Activated CD4-positive, alpha-beta memory T cell treated with anti-CD3 and anti-CD28 coated beads for 36 hours (primary cell): ENCODE measurements at regions of chr16 and their contacts with region 1.

Region 1: DNA sequence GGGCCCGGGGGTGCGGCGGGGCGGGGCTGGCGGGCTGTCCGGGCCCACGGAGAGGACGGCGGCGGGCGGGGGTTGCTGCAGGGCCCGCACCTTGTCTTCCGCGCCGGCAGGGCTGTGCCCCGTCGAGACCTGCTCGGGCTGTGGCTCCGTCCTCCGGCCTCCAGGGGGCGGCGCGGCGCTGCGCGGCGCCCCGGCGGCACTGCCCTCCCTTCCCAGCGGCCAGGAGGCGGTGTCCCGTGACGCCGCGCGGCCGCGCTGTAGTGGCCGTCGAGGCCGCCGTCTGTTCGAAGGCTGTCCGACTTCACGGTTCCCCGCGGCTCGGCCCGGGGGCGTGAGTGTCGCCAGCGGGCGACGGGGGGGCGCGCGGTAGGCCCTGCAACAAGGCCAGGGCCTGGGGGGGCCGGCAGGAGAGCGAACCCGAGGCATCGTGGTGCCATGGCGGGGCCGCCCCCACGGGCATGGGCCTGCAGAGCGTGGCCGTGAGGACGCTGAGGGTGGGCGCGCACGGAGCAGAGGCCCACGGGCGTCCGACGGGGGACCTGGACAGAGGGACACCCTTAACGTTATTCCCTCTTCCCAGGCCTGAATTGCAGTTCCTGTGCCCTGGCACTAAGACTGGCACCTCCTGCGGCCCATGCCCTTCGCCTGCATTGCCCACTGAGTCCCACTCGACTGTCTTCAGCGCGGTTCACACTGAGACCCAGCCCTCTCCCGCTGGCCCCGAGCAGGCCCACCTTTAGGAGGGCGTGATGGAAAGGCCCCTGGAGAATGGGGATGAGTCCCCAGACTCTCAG is at the start of gene PLEKHG4:
- DNase-seq: peak; percentile 90
- H3K4me3 Mint-ChIP-seq: peak within 1 kb of the TSS; percentile 86
- H3K27ac Mint-ChIP-seq: peak within 1 kb of the TSS; percentile 88
- H3K4me1 Mint-ChIP-seq: peaks cover 20% of the 10 kb centered on the region
- H3K27me3 Mint-ChIP-seq: no peaks in the 10 kb centered on the region
- total RNA-seq, gene PLEKHG4: 22.7 to 24.6 TPM

Region 2: DNA sequence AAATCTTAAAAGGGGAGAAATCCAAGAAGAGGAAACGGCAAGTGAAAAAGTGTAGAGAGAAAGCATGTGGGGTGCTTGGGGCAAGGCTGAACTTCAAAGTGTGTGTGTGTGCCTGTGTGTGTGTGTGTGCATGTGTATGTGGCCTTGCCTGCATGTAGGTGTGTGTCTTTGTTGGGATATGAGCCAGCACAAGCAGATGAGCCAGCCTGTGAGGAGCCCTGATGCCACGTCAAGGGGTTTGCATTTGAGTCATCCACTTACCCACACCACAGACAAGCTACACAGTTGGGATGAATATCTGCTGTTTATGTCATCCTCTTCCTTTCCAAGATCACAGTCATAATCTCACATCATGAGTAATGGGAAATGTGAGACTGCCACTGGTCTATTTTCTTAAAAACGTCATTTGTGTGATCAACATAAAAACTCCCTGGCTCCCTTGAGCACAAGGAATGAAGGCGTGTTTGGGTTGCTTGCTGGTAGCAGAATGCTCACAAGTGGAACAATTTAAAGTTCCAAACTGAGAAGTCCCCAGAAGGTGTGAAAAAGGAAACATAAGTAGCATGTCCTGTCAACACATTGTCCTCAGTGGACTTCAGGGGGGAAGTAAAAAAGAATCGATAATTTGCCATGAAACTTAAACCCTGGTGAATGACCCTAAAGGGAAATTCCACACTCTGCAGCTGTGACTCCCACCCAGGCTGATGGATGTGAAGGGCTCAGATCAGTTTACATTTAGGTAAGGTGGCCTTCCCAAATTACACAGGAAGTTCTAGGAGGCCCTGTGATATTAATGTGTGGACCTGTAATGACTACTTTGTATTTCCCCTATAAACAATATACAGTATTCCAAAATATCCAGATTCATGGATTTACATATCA is 32.4 kb after region 1 on chr16:
- CTCF ChIA-PET with region 1: interaction called, 6 read pairs
- POLR2A ChIA-PET with region 1: interaction called, 4 read pairs
- intact Hi-C with region 1: loop called (anchors 1 kb)
- DNase-seq: peak; percentile 95
- H3K4me3 Mint-ChIP-seq: peak overlapping the region; percentile 20
- H3K27ac Mint-ChIP-seq: peak overlapping the region; percentile 95
- H3K4me1 Mint-ChIP-seq: peaks cover 41% of the 10 kb centered on the region
- H3K27me3 Mint-ChIP-seq: no peaks in the 10 kb centered on the region

Region 3: GRCh38 chr16:67339453-67339852 is 60.0 kb after region 1 on chr16:
- CTCF ChIA-PET with region 1: interaction called, 7 read pairs
- POLR2A ChIA-PET with region 1: no interaction called
- intact Hi-C with region 1: loop called (anchors 1 kb)
- DNase-seq: no peak
- H3K4me3 Mint-ChIP-seq: no peak overlapping the region
- H3K27ac Mint-ChIP-seq: no peak overlapping the region
- H3K4me1 Mint-ChIP-seq: no peaks in the 10 kb centered on the region
- H3K27me3 Mint-ChIP-seq: peaks cover 6% of the 10 kb centered on the region